ENCODE measurements at regions of chr3 and their contacts with region 1.

Region 1: GRCh38 chr3:11155341-11156025 is 1.2 kb downstream of the HRH1 start:
- DNase-seq: peak; percentile 87 to 89
- H3K4me3 ChIP-seq: peak overlapping the region; percentile 84 to 89
- H3K27ac ChIP-seq: peak overlapping the region; percentile 92 to 94
- H3K4me1 ChIP-seq: peaks cover 0 to 60% (median 29%) of the 10 kb centered on the region in 4 donors
- H3K27me3 ChIP-seq: no peaks in the 10 kb centered on the region
- CTCF ChIP-seq: peak; percentile 74 to 82

Region 2: DNA sequence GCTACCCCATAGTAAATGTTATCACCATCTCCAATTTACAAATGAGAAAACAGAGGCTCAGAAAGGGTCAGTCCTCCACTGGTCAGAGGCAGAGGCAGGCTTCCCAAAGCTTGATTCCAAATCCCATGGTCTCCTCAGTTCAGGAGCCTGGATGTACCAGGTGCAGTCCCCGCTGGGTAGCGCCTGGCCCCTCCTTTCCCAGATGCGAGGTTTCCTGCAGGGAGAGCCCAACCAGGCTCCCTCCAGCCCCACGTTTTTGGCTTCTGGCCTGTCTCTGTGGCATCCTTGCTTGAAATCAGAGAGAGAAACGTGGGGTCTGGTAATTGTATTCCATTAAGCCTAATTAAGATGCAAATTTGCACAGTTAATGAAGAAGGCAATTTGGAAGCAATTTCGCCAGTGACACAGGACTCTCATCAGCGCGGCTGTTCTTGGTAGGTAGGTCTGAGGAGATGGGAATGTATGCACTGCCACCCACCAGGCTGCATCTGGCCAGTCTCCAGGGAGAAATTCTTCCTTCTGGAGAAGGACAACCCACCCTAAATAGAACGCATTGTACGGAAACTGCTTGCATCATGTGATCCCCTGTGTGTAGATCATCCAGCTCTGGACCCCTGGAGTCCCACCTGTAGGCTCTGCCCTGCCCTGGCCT is 49.3 kb after region 1 on chr3:
- intact Hi-C with region 1: loop called (anchors 5 kb)
- DNase-seq: peak in 1 of 2 donors; percentile 68
- H3K4me3 ChIP-seq: no peak overlapping the region
- H3K27ac ChIP-seq: peak overlapping the region; percentile 18 to 81
- H3K4me1 ChIP-seq: peaks cover 0 to 79% (median 42%) of the 10 kb centered on the region in 4 donors
- H3K27me3 ChIP-seq: no peaks in the 10 kb centered on the region
- CTCF ChIP-seq: no peak

Region 3: DNA sequence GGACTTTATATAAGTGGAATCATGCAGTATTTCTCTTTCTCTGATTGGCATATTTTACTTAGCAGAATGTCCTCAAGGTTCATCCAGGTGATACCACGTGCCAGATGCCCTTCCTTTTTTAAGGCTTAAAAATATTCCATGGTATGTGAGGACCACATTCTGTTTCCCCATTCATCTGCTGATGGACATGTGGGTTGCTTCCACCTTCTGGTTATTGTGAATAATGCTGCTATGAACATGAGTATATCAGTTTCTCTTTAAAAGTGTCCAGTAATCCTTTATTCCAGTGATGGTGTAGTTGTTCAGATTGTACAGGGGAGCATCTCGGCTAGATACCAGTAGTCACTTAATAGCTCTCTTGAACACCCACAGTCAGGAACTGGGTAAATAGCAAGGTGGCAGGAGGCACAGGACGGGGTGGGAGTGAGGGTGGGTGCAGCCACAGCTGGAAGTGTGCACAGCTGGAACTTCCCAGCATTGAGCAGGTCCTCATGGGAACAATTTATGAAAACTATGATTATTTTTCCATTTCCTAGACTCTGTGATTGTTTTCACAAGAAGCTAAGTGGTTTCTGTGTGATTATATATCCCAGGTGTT is 66.4 kb after region 1 on chr3:
- intact Hi-C with region 1: no loop called
- DNase-seq: no peak
- H3K4me3 ChIP-seq: no peak overlapping the region
- H3K27ac ChIP-seq: peak overlapping the region in 1 of 2 donors; percentile 13
- H3K4me1 ChIP-seq: peaks cover 0 to 42% (median 8%) of the 10 kb centered on the region in 4 donors
- H3K27me3 ChIP-seq: no peaks in the 10 kb centered on the region
- CTCF ChIP-seq: peak; percentile 27 to 44